ENCODE measurements at regions of chr4 and their contacts with region 1.

Region 1: GRCh38 chr4:117324851-117325491 is 239.6 kb upstream of the TRAM1L1 start:
- DNase-seq: peak; percentile 98
- H3K4me3 ChIP-seq: peak overlapping the region in 2 of 3 experiments; percentile 62 to 80
- H3K27ac ChIP-seq: peak overlapping the region; percentile 98
- H3K4me1 ChIP-seq: peaks cover 12% of the 10 kb centered on the region
- H3K27me3 ChIP-seq: no peaks in the 10 kb centered on the region
- CTCF ChIP-seq: no peak

Region 2: GRCh38 chr4:117400039-117400835 is 75.3 kb after region 1 on chr4:
- CTCF ChIA-PET with region 1: no interaction called
- dilution Hi-C with region 1: no loop called
- in situ Hi-C with region 1: no loop called
- intact Hi-C with region 1: loop called (anchors 5 kb)
- DNase-seq: peak; percentile 60
- H3K4me3 ChIP-seq: no peak overlapping the region
- H3K27ac ChIP-seq: peak overlapping the region; percentile 49
- H3K4me1 ChIP-seq: peaks cover 7% of the 10 kb centered on the region
- H3K27me3 ChIP-seq: no peaks in the 10 kb centered on the region
- CTCF ChIP-seq: no peak

Region 3: GRCh38 chr4:117434424-117434823 is 109.5 kb after region 1 on chr4:
- CTCF ChIA-PET with region 1: no interaction called
- dilution Hi-C with region 1: no loop called
- in situ Hi-C with region 1: no loop called
- intact Hi-C with region 1: no loop called
- DNase-seq: no peak
- H3K4me3 ChIP-seq: no peak overlapping the region
- H3K27ac ChIP-seq: no peak overlapping the region
- H3K4me1 ChIP-seq: no peaks in the 10 kb centered on the region
- H3K27me3 ChIP-seq: no peaks in the 10 kb centered on the region
- CTCF ChIP-seq: no peak

Region 4: GRCh38 chr4:117491516-117491915 is 166.5 kb after region 1 on chr4:
- CTCF ChIA-PET with region 1: no interaction called
- dilution Hi-C with region 1: no loop called
- in situ Hi-C with region 1: no loop called
- intact Hi-C with region 1: loop called (anchors 10 kb)
- DNase-seq: no peak
- H3K4me3 ChIP-seq: no peak overlapping the region
- H3K27ac ChIP-seq: no peak overlapping the region
- H3K4me1 ChIP-seq: no peaks in the 10 kb centered on the region
- H3K27me3 ChIP-seq: no peaks in the 10 kb centered on the region
- CTCF ChIP-seq: no peak